HCT116 (cell line): ENCODE measurements at regions of chr22 and their contacts with region 1.

Region 1: DNA sequence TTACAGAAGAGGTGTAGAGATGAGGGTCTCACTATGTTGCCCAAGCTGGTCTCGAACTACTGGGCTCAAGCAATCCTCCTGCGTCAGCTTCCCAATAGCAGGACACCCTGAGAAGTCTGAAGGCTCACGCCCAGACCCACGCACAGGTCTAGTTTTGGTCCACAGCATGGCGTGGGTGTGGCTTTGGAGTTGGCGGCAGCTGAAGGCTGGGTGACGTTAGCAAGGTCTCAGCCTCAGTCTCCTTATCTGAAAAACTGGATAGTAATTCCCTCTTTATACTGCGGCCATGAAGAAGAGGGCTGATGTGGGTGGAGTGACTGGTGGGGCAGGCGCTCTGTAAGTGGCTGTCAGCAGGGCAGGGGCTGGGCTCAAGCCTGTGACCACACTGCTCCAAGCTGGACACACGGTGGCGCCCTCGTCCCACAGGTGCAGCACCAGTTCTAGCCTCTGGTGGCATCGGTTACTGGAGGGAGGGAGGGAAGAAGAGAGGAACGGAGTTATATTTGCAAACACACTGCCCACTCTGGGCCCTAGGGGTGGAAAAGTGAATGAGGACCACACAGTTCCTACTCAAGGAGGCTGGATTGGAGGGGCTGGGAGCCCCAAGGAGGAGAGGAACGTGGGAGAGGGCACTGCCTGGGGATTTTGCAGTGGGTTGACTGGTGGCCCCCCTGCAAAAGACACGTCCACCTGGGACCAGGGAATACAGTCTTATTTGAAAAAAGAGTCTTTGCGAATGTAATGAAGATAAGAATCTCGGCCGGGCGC is 19.6 kb upstream of the CARD10 start:
- DNase-seq: peak; percentile 91
- ATAC-seq: peak; percentile 99
- H3K4me3 ChIP-seq: peak overlapping the region in 1 of 2 experiments; percentile 32; a peak in 2 of 4 replicates
- H3K27ac ChIP-seq: no peak overlapping the region
- H3K4me1 ChIP-seq: peaks cover 26 to 50% of the 10 kb centered on the region in 2 experiments
- H3K27me3 ChIP-seq: no peaks in the 10 kb centered on the region
- CTCF ChIP-seq: peak; percentile 91 to 98 (median 96)
- POLR2A ChIP-seq: no peak
- RAD21 ChIP-seq: peak; percentile 100

Region 2: GRCh38 chr22:37566903-37567820 is 28.4 kb after region 1 on chr22:
- CTCF ChIA-PET with region 1: interaction called, 238 read pairs
- POLR2A ChIA-PET with region 1: interaction called, 8 read pairs
- RAD21 ChIA-PET with region 1: interaction called, 6 to 17 read pairs
- intact Hi-C with region 1: no loop called
- DNase-seq: peak; percentile 84
- ATAC-seq: peak; percentile 62
- H3K4me3 ChIP-seq: no peak overlapping the region
- H3K27ac ChIP-seq: peak overlapping the region; percentile 72
- H3K4me1 ChIP-seq: peaks cover 76 to 98% of the 10 kb centered on the region in 2 experiments
- H3K27me3 ChIP-seq: no peaks in the 10 kb centered on the region
- CTCF ChIP-seq: peak in 2 of 3 experiments; percentile 94 to 97; a peak in 4 of 6 replicates
- POLR2A ChIP-seq: no peak
- RAD21 ChIP-seq: no peak

Region 3: GRCh38 chr22:37594237-37594636 is 55.5 kb after region 1 on chr22:
- CTCF ChIA-PET with region 1: interaction called, 35 read pairs
- POLR2A ChIA-PET with region 1: interaction called, 4 read pairs
- RAD21 ChIA-PET with region 1: interaction called in 1 of 2 experiments, 14 read pairs
- intact Hi-C with region 1: loop called (anchors 1 kb)
- DNase-seq: no peak
- ATAC-seq: peak; percentile 70
- H3K4me3 ChIP-seq: no peak overlapping the region
- H3K27ac ChIP-seq: no peak overlapping the region
- H3K4me1 ChIP-seq: peaks cover 4 to 22% of the 10 kb centered on the region in 2 experiments; a peak in 3 of 4 replicates
- H3K27me3 ChIP-seq: no peaks in the 10 kb centered on the region
- CTCF ChIP-seq: peak; percentile 35 to 68 (median 63); a peak in 5 of 6 replicates
- POLR2A ChIP-seq: no peak
- RAD21 ChIP-seq: peak; percentile 34; the same call in 1 of the 2 replicates

Region 4: GRCh38 chr22:37643225-37643847 is 104.6 kb after region 1 on chr22:
- CTCF ChIA-PET with region 1: interaction called, 13 read pairs
- POLR2A ChIA-PET with region 1: no interaction called
- RAD21 ChIA-PET with region 1: no interaction called
- intact Hi-C with region 1: no loop called
- DNase-seq: no peak
- ATAC-seq: peak; percentile 73
- H3K4me3 ChIP-seq: no peak overlapping the region
- H3K27ac ChIP-seq: no peak overlapping the region
- H3K4me1 ChIP-seq: peaks cover 34 to 60% of the 10 kb centered on the region in 2 experiments
- H3K27me3 ChIP-seq: no peaks in the 10 kb centered on the region
- CTCF ChIP-seq: peak; percentile 85 to 94 (median 93)
- POLR2A ChIP-seq: no peak
- RAD21 ChIP-seq: peak; percentile 81

Region 5: GRCh38 chr22:37676736-37677492 is 138.1 kb after region 1 on chr22:
- CTCF ChIA-PET with region 1: interaction called, 7 read pairs
- POLR2A ChIA-PET with region 1: no interaction called
- RAD21 ChIA-PET with region 1: no interaction called
- intact Hi-C with region 1: loop called (anchors 2 kb)
- DNase-seq: peak; percentile 69
- ATAC-seq: peak; percentile 49
- H3K4me3 ChIP-seq: peak overlapping the region; percentile 71 to 86
- H3K27ac ChIP-seq: peak overlapping the region; percentile 97
- H3K4me1 ChIP-seq: peaks cover 40 to 75% of the 10 kb centered on the region in 2 experiments
- H3K27me3 ChIP-seq: no peaks in the 10 kb centered on the region
- CTCF ChIP-seq: no peak
- POLR2A ChIP-seq: no peak
- RAD21 ChIP-seq: no peak